Activated naive CD4-positive, alpha-beta T cell treated with anti-CD3 and anti-CD28 coated beads for 36 hours (primary cell): ENCODE measurements at regions of chr17 and their contacts with region 1.

Region 1: DNA sequence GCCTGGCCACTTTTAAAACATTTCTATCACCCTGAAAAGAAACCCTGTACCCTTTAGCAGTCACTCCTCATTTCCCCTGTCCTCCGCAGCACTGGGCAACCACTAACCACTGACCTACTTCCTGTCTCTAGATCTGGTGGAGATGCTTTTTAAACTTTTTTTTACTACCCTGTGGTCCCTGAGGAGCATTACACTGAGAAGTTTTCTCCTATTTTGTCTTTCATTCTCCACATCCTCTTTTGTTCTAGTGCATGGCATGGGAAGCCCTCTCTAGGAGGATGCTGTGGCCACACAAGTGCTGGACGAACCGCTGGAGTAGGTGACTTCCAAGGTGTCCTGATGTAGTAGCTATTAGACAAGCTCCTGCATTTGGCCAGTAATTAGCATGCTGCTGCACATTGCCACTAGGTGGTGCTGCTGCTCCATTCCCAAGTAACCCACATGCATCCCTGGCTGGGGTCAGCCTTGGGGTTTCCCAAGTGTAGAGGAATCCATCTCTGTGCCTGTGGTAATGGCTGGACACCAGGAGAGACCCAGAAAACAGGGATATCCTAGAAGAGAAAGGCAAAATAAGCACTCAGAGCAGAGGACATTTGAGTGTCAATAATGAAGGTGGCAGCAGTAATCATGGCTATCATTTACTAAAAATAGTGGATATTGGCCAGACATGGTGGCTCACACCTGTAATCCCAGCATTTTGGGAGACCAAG is 143.8 kb upstream of the CRHR1 start:
- DNase-seq: peak; percentile 84
- H3K4me3 Mint-ChIP-seq: no peak overlapping the region
- H3K27ac Mint-ChIP-seq: no peak overlapping the region
- H3K4me1 Mint-ChIP-seq: no peaks in the 10 kb centered on the region
- H3K27me3 Mint-ChIP-seq: no peaks in the 10 kb centered on the region

Region 2: DNA sequence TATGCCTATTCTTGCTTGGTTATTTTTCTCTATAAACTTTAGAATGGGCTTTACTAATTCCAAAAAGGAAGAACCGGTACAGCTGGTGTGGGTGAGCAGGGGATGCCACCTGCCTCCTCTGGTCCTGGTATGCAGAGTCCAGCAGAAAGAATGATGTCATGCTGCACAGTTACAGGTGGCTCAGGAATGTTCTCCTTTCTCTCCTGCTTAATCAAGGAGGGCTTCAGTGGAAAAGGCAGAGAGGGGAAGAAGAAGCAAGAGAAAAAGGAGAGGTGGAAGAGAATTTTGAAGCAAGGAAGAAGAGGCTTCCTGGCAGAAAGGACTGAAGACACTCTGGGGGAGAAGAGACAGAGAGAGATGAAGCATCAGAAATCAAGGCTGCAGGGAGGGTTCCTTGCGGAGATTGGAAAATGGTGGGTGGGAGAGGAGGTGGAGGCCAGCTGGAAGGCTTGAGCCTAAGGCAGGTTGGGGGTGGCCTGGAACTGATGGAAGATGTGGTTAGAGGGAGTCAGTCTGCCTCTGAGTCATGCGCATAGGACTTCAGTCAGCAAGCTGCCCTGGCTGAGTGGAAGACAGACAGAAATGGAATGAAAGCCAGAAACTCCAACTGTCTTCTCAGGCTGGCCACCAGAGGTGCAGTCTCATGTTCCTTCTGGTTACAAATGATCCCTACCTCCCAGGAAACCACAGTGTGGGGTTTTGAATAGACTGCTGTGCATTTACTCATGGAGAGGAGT is 79.2 kb after region 1 on chr17:
- CTCF ChIA-PET with region 1: no interaction called
- intact Hi-C with region 1: no loop called
- DNase-seq: no peak
- H3K4me3 Mint-ChIP-seq: no peak overlapping the region
- H3K27ac Mint-ChIP-seq: no peak overlapping the region
- H3K4me1 Mint-ChIP-seq: no peaks in the 10 kb centered on the region
- H3K27me3 Mint-ChIP-seq: peaks cover 23% of the 10 kb centered on the region

Region 3: DNA sequence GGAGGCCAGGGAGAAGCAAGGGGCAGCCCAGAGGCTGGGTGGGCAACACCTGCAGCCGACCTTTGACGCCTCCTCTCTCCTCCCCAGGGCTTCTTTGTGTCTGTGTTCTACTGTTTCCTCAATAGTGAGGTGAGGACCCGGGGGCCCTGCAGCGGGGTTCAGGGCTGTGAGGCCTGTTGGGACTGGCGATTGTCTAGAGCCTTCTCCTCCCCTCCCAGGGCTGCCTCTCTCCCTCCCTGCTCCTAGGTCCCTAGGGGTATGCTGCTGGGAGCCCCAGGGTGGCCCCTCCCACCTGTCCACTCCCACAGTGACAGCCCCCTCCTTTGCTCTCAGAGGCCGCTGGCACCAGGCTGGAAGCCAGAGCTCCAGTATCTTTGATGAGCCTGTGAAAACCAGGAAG is 193.6 kb after region 1 on chr17:
- CTCF ChIA-PET with region 1: interaction called, 40 read pairs
- intact Hi-C with region 1: loop called (anchors 1 kb)
- DNase-seq: no peak
- H3K4me3 Mint-ChIP-seq: no peak overlapping the region
- H3K27ac Mint-ChIP-seq: no peak overlapping the region
- H3K4me1 Mint-ChIP-seq: no peaks in the 10 kb centered on the region
- H3K27me3 Mint-ChIP-seq: no peaks in the 10 kb centered on the region

Region 4: GRCh38 chr17:45852535-45853297 is 212.4 kb after region 1 on chr17:
- CTCF ChIA-PET with region 1: interaction called, 9 read pairs
- intact Hi-C with region 1: loop called (anchors 5 kb)
- DNase-seq: peak; percentile 79
- H3K4me3 Mint-ChIP-seq: no peak overlapping the region
- H3K27ac Mint-ChIP-seq: no peak overlapping the region
- H3K4me1 Mint-ChIP-seq: no peaks in the 10 kb centered on the region
- H3K27me3 Mint-ChIP-seq: peaks cover 15% of the 10 kb centered on the region

Region 5: GRCh38 chr17:46167826-46168569 is 527.7 kb after region 1 on chr17:
- CTCF ChIA-PET with region 1: no interaction called
- intact Hi-C with region 1: no loop called
- DNase-seq: no peak
- H3K4me3 Mint-ChIP-seq: no peak overlapping the region
- H3K27ac Mint-ChIP-seq: peak overlapping the region; percentile 54
- H3K4me1 Mint-ChIP-seq: peaks cover 83% of the 10 kb centered on the region
- H3K27me3 Mint-ChIP-seq: no peaks in the 10 kb centered on the region